ENCODE measurements at regions of chr11 and their contacts with region 1.

Region 1: GRCh38 chr11:128365044-128365443 is 222.3 kb downstream of the ETS1 start:
- DNase-seq: peak; percentile 62
- ATAC-seq: peak; percentile 40; the same call in 1 of the 2 replicates
- H3K4me3 ChIP-seq: no peak overlapping the region
- H3K27ac ChIP-seq: no peak overlapping the region
- H3K4me1 ChIP-seq: peaks cover 8% of the 10 kb centered on the region; the same call in 1 of the 2 replicates
- H3K27me3 ChIP-seq: no peaks in the 10 kb centered on the region
- CTCF ChIP-seq: no peak

Region 2: DNA sequence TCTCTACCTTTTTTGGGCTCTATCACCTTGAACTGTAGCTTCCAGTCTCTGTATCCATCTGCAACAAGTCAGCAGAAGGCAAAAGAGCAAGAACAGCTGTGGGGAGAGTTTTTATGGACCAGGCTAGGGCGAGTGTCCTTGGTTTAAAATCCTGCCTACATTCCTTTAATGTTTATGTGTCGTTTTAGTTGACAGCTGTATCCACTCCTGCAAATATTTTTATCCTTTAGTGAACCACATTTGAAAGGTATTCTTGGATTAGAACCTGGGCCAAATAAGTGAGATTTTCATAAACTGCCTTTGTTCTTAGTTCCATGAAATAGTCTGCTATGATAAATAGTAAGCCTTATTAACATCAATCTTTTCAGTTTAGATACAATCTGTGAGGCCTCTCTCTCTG is 489.9 kb before region 1 on chr11:
- CTCF ChIA-PET with region 1: no interaction called
- POLR2A ChIA-PET with region 1: no interaction called
- intact Hi-C with region 1: no loop called
- DNase-seq: no peak
- ATAC-seq: no peak
- H3K4me3 ChIP-seq: no peak overlapping the region
- H3K27ac ChIP-seq: no peak overlapping the region
- H3K4me1 ChIP-seq: no peaks in the 10 kb centered on the region
- H3K27me3 ChIP-seq: 0 out of 2 replicates have a peak, but pooled peaks cover 4% of the 10 kb centered on the region
- CTCF ChIP-seq: no peak

Region 3: DNA sequence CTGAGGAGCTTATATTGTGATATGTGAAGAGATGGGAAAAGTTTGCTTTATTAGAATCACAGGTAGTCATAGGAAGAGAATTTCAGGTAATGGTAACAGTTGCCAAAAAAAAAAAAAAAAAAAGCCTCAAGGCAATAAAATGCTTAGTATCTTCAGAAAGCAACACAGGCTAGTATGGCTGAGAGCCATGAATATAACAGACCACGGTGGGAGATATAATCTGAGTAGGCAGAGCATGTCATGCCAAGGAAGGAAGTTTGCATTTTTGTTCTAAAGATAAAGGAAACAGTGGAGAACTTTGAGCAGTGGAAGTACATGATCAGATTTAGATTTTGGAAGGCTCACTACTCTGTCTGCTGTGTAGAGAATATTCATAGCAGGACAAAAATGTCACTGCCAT is 10.9 kb after region 1 on chr11:
- CTCF ChIA-PET with region 1: interaction called, 18 read pairs
- POLR2A ChIA-PET with region 1: no interaction called
- intact Hi-C with region 1: no loop called
- DNase-seq: peak; percentile 92
- ATAC-seq: peak; percentile 49
- H3K4me3 ChIP-seq: no peak overlapping the region
- H3K27ac ChIP-seq: peak overlapping the region; percentile 11
- H3K4me1 ChIP-seq: peaks cover 25% of the 10 kb centered on the region
- H3K27me3 ChIP-seq: no peaks in the 10 kb centered on the region
- CTCF ChIP-seq: no peak